ENCODE measurements at regions of chr15 and their contacts with region 1.

Region 1: DNA sequence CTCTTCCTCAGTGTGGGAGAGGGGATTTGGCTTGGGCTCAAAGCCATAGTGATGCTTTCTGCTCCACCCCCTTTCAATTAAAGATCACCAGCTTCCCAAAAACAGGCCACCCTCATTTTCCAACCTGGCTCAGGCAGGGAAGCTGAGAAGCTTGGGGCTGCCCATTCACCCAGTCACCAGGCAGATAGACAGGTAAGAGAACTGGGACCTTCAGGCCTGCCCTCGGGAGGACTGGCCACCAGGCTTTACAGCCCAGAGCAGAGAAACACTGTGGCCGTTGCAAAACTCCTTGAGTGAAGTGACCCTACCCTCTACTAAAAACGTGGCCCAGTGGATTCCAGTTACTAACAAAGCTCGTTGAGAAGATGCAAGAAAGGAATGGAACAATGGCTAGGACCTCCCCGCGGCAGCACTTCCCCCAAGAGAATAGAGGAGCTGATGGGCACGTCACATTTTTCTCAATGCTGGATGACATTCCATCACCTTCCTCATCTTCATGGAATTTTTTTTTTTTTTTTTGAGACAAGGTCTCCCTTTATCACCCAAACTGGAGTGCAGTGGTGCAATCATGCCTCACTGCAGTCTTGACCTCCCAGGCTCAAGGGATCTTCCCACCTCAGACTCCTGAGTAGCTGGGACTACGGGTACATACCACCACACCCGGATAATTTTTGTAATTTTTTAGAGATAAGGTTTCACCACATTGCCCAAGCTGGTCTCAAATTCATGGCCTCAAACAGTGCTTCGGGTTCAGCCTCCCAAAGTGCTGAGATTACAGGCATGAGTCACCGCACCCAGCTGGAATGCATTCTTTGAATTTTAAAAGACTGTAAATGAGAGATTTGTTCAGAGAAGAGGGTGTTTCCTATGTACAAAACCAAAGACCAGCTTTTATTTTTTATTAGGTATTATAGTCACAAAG is 37.9 kb downstream of the LIPC start:
- DNase-seq: peak; percentile 86 to 97
- H3K4me3 ChIP-seq: peak overlapping the region; percentile 35; the same call in 1 of the 2 replicates
- H3K27ac ChIP-seq: peak overlapping the region; percentile 100
- H3K4me1 ChIP-seq: peaks cover 66% of the 10 kb centered on the region
- H3K27me3 ChIP-seq: no peaks in the 10 kb centered on the region
- CTCF ChIP-seq: no peak

Region 2: DNA sequence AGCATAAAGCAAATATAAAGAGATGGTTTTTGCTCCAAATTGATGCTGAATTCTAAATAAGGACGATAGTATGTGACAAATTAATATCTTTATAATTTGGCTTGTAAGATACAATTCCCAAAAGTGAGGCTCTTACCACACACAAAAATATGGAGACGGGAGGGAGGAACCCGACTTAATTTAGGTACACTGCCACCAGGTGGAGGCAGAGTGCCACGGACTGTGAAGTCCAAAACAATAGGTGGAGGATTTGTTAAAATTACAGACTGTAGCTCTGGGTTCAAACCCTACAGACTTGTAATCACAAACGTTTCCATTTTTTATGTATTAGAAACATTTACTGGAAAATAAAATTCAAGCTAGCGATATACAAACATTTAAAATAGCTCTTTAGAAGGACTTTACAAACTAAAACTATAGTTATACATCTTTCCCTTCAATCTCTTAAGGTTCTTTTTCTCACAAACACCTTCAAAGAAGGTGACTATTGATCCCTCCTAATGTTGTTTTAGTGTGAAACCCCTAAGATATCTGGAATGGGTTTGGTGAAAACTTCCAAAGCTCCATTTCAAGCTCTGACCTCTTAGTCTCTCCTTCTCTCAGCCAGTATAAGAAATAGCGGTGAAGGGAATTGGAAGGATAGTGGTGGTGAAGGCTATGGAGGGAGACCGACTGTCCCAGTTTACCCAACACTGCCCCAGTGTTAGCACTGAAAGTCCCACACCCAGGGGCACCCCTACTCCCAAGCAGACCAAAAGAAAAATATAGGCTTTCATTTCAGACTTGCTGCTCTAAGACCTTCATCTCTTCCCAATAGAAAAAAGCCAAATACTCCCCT is 241.8 kb before region 1 on chr15:
- CTCF ChIA-PET with region 1: interaction called, 8 read pairs
- POLR2A ChIA-PET with region 1: no interaction called
- intact Hi-C with region 1: loop called (anchors 1 kb)
- DNase-seq: peak; percentile 48 to 69
- H3K4me3 ChIP-seq: no peak overlapping the region
- H3K27ac ChIP-seq: peak overlapping the region; percentile 32; the same call in 1 of the 2 replicates
- H3K4me1 ChIP-seq: peaks cover 25% of the 10 kb centered on the region
- H3K27me3 ChIP-seq: no peaks in the 10 kb centered on the region
- CTCF ChIP-seq: peak; percentile 87

Region 3: GRCh38 chr15:58346389-58346788 is 123.3 kb before region 1 on chr15:
- CTCF ChIA-PET with region 1: no interaction called
- POLR2A ChIA-PET with region 1: interaction called, 17 read pairs
- intact Hi-C with region 1: no loop called
- DNase-seq: peak; percentile 84 to 91
- H3K4me3 ChIP-seq: no peak overlapping the region
- H3K27ac ChIP-seq: peak overlapping the region; percentile 51
- H3K4me1 ChIP-seq: peaks cover 23% of the 10 kb centered on the region
- H3K27me3 ChIP-seq: no peaks in the 10 kb centered on the region
- CTCF ChIP-seq: no peak

Region 4: DNA sequence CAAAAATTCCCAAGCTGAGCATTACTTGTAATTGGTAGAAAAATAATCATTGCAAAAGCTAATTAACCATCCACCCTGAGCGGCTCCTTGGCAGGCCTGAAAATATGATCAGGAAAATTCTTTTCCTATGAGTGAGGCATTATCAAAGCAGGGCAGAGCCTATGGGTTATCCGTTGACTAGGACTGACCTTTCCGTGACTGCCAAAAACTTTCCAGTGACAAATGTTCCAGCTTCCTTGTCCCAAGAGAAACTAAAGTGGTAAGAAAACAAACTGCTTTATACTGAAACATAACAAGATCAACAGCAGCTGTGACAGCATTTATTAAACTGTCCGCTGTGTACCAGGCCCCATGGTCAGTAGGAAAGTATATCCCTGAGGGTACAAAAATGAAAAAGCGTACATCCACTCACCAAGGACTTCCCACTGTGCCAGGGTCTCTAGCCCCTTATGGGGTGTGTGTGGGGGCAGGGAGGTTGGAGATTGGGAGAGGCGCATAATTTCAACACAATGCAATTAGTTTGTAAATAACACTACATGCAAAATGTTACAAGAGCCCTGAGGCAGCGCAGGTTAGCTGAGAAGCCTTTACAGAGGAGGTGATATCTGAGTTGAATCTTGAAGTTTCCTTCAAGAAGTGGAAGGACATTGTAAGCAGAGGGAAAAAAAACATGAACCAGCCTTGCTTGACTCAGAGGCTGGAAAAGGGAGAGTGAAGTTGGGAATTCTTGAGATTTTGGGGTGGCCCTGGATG is 29.4 kb before region 1 on chr15:
- CTCF ChIA-PET with region 1: interaction called, 5 read pairs
- POLR2A ChIA-PET with region 1: interaction called, 10 read pairs
- intact Hi-C with region 1: loop called (anchors 1 kb)
- DNase-seq: peak; percentile 43 to 94
- H3K4me3 ChIP-seq: peak overlapping the region; percentile 41; the same call in 1 of the 2 replicates
- H3K27ac ChIP-seq: peak overlapping the region; percentile 100
- H3K4me1 ChIP-seq: peaks cover 65% of the 10 kb centered on the region
- H3K27me3 ChIP-seq: no peaks in the 10 kb centered on the region
- CTCF ChIP-seq: no peak

Region 5: GRCh38 chr15:58546635-58547627 is 77.2 kb after region 1 on chr15:
- CTCF ChIA-PET with region 1: no interaction called
- POLR2A ChIA-PET with region 1: interaction called, 37 read pairs
- intact Hi-C with region 1: loop called (anchors 1 kb)
- DNase-seq: peak; percentile 88 to 97
- H3K4me3 ChIP-seq: peak overlapping the region; percentile 43; the same call in 1 of the 2 replicates
- H3K27ac ChIP-seq: peak overlapping the region; percentile 97
- H3K4me1 ChIP-seq: peaks cover 50% of the 10 kb centered on the region
- H3K27me3 ChIP-seq: no peaks in the 10 kb centered on the region
- CTCF ChIP-seq: no peak

Region 6: DNA sequence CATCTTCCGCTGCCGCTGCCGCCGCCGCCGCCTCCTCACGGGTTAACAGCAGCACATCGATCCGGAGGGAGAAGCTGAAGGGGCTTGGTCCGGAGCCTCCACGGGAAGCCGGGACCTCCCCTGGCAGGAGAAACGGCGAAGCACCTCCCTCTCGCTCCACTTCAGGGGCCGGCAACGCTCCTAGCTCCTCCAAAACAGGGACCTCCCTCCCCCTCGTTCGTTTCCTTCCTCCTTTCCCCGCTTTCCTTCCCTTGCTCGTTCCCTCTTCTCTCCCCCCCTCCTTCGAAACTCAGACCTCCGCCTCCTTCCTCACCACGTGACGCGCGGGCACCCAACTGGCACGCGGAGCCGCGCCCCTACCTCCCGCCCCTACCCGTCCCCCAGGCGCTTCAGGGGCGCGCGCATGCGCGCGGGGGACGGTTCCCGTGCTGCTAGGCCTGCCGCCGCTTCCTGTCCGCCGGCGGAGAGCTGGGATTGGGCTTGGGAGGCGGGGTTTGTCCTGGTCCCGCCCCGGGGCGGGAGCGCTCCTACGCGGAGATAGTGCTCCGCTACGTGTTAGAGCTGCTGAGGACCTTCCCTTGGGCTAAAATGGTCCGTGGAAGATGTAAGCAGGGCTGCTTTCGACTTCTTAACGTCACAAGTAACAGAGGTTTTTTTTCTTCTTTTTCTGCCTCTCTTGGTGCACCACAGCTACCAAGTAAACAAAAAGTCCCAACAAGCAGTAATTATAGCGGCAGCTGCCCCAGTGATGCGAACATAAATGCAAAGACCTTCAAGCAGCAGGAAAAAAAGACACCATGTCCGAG is 280.0 kb after region 1 on chr15 and contains the start of gene ADAM10:
- CTCF ChIA-PET with region 1: no interaction called
- POLR2A ChIA-PET with region 1: interaction called, 8 read pairs
- intact Hi-C with region 1: loop called (anchors 5 kb)
- DNase-seq: peak; percentile 89 to 98
- H3K4me3 ChIP-seq: peak within 1 kb of the TSS; percentile 97
- H3K27ac ChIP-seq: peak within 1 kb of the TSS; percentile 79
- H3K4me1 ChIP-seq: peaks cover 20% of the 10 kb centered on the region
- H3K27me3 ChIP-seq: no peaks in the 10 kb centered on the region
- CTCF ChIP-seq: no peak
- total RNA-seq, gene ADAM10: 160 and 239 TPM in 2 replicates